CD8-positive, alpha-beta T cell (primary cell): ENCODE measurements at regions of chr2 and their contacts with region 1.

Region 1: DNA sequence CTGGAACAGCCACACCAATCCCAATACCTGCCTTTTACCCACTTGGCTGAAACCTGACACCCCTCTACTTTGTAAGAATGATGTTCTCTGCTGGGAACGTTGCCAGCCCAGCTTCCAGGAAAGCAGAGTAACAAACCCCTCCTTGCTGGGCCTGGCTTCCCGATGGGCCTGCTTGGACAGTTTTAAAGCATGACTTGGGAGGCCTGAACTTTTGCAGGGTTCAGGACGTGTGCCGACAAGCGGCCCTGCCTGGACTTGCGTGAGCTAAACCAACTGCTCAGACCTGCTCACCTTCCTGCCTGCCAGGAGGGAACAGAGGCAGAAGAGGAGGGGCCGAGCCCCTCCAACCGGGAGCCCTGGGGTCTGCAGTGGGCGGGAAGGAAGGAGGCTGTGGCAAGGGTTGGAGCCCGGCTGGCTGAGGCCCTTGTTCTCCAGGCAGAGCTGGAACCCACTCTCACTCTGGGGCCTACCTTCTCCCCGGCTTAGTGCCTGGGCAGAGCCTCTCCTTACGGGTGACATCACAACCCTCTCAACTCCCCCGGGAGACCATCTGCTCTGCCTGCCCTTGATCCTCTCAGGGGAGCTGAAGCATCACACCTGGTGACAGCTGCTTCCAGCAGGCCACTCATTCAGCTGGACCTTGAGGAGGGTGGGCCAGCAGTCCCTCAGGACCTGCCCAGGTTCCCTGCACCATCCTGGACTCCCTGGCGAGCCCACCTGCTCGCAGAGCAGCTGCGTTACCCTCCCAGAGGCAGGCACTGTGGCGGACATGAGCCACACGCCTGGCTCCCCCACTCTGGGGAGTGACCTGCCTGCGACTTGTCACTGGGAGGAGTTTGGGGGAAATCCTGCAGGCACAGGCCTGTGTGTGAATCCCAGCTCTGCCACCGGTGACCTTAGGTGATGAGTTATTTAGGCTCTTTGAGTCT is 13.2 kb downstream of the HS6ST1 start:
- DNase-seq: no peak
- ATAC-seq: no peak
- H3K4me3 ChIP-seq: no peak overlapping the region
- H3K4me3 Mint-ChIP-seq: no peak overlapping the region
- H3K27ac ChIP-seq: no peak overlapping the region
- H3K27ac Mint-ChIP-seq: no peak overlapping the region
- H3K4me1 ChIP-seq: no peaks in the 10 kb centered on the region
- H3K4me1 Mint-ChIP-seq: peaks cover 4% of the 10 kb centered on the region
- H3K27me3 ChIP-seq: no peaks in the 10 kb centered on the region
- H3K27me3 Mint-ChIP-seq: no peaks in the 10 kb centered on the region
- CTCF ChIP-seq: no peak

Region 2: DNA sequence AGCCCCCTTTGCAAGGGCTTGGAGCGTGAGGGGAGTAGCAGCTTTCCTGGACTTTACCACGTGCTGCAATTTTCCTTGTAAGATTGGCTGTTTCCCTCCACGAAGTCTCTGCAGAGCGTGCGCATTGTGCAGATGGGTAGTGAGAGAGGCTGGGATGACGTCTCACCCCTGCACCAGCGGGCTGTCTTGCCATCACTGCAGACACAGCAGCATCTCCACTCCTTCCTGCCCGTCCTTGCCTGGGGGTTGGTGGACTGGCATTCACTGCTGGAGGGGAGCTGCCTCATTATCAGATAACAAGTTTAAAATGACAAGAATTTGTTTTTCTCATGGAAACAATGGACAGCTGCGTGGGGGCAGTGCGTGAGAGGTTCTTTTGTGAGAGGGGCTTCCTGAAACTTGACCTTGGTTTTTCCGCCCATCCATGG is 58.5 kb after region 1 on chr2:
- CTCF ChIA-PET with region 1: no interaction called
- POLR2A ChIA-PET with region 1: no interaction called
- intact Hi-C with region 1: loop called in 1 of 2 experiments (anchors 2 kb)
- DNase-seq: no peak
- ATAC-seq: no peak
- H3K4me3 ChIP-seq: no peak overlapping the region
- H3K4me3 Mint-ChIP-seq: no peak overlapping the region
- H3K27ac ChIP-seq: no peak overlapping the region
- H3K27ac Mint-ChIP-seq: no peak overlapping the region
- H3K4me1 ChIP-seq: no peaks in the 10 kb centered on the region
- H3K4me1 Mint-ChIP-seq: no peaks in the 10 kb centered on the region
- H3K27me3 ChIP-seq: no peaks in the 10 kb centered on the region
- H3K27me3 Mint-ChIP-seq: peaks cover 9% of the 10 kb centered on the region
- CTCF ChIP-seq: no peak